GM12878 (cell line): ENCODE measurements at regions of chr2 and their contacts with region 1.

Region 1: GRCh38 chr2:8514796-8515758 is 166.8 kb upstream of the ID2 start:
- DNase-seq: peak; percentile 99
- ATAC-seq: peak; percentile 82
- H3K4me3 ChIP-seq: peak overlapping the region; percentile 51; the same call in 1 of the 2 replicates
- H3K27ac ChIP-seq: peak overlapping the region; percentile 93
- H3K4me1 ChIP-seq: peaks cover 46% of the 10 kb centered on the region
- H3K27me3 ChIP-seq: no peaks in the 10 kb centered on the region
- CTCF ChIP-seq: no peak
- EP300 ChIP-seq: peak; percentile 76 to 95; a peak in 3 of 4 replicates
- POLR2A ChIP-seq: no peak
- RAD21 ChIP-seq: peak; percentile 36; the same call in 1 of the 2 replicates

Region 2: DNA sequence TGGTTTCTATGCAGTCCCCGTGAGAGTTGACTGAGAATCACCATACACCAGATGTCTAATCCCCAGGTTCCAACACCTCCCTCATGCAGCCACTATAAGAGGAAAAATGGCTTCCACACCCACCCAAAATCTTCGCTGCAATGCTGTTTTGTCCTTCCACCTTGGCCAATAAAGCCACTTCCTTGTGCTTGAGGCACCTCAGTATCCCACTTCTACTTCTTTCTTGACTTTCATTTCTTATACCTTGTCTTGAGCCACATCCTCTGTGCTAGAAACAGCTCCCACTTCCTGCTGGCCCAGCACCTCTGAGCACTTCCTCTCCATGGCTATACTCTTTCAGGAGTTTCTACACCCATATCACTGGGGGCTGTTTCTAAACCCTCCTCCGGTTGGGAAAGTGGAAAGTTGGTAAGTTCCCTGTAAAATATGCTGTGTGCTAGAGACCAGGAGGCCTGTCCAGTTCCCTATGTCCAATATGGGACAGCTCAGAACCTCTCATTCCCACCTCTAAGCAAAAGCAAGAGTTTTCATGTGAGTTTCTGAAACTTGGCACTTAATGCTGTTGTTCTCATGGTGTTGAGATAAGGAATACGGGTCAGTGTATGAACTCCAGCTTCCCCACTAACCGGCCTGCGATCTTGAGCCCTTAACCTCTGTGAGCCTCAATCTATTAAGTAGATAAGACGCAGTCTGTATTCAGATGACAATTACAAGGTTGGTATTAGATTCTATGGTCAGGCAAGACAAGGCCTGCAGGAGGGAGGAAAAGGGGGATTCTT is 42.3 kb before region 1 on chr2:
- CTCF ChIA-PET with region 1: interaction called, 5 read pairs
- POLR2A ChIA-PET with region 1: interaction called, 73 read pairs
- RAD21 ChIA-PET with region 1: interaction called, 49 read pairs
- SMC1A ChIA-PET with region 1: interaction called, 34 read pairs
- in situ Hi-C with region 1: no loop called
- intact Hi-C with region 1: no loop called
- DNase-seq: no peak
- ATAC-seq: peak; percentile 20
- H3K4me3 ChIP-seq: no peak overlapping the region
- H3K27ac ChIP-seq: peak overlapping the region; percentile 33
- H3K4me1 ChIP-seq: peaks cover 59% of the 10 kb centered on the region
- H3K27me3 ChIP-seq: no peaks in the 10 kb centered on the region
- CTCF ChIP-seq: no peak
- EP300 ChIP-seq: peak; percentile 10 to 24; a peak in 1 of 4 replicates
- POLR2A ChIP-seq: no peak
- RAD21 ChIP-seq: no peak

Region 3: GRCh38 chr2:8559805-8560204 is 44.7 kb after region 1 on chr2:
- CTCF ChIA-PET with region 1: no interaction called
- POLR2A ChIA-PET with region 1: no interaction called
- RAD21 ChIA-PET with region 1: no interaction called
- SMC1A ChIA-PET with region 1: no interaction called
- in situ Hi-C with region 1: no loop called
- intact Hi-C with region 1: no loop called
- DNase-seq: no peak
- ATAC-seq: no peak
- H3K4me3 ChIP-seq: no peak overlapping the region
- H3K27ac ChIP-seq: no peak overlapping the region
- H3K4me1 ChIP-seq: no peaks in the 10 kb centered on the region
- H3K27me3 ChIP-seq: no peaks in the 10 kb centered on the region
- CTCF ChIP-seq: no peak
- EP300 ChIP-seq: no peak
- POLR2A ChIP-seq: no peak
- RAD21 ChIP-seq: no peak

Region 4: DNA sequence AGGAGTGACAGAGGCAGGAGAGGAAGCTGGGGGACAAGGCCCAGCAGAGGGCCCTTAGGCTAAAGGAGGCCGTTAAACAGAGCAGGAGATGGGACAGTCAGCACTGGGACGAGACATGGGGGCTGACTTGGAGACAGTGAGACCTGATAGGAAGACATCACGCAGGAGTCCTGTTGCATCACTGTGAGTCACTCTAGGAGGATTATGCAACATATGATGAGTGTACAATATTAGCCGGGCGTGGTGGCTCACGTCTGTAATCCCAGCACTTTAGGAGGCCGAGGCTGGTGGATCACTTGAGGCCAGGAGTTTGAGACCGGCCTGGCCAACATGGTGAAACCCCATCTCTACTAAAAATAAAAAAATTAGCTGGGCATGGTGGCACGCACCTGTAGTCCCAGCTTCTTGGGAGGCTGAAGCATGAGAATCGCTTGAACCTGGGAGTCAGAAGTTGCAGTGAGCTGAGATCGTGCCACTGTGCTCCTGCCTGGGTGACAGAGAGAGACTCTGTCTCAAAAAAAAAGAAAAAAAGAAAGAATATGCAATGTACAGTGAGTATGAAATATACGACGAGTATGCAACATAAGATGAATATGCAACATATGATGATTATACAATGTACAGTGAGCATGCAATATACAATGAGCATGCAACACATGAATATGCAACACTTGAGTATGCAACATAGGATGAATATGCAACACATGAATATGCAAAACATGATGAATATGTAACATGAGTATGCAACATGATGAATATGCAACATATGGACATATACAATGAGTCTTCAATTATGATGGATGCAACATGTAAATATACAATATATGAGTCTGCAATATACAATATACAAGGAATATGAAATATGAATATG is 83.5 kb after region 1 on chr2:
- CTCF ChIA-PET with region 1: no interaction called
- POLR2A ChIA-PET with region 1: no interaction called
- RAD21 ChIA-PET with region 1: no interaction called
- SMC1A ChIA-PET with region 1: no interaction called
- in situ Hi-C with region 1: no loop called
- intact Hi-C with region 1: no loop called
- DNase-seq: no peak
- ATAC-seq: no peak
- H3K4me3 ChIP-seq: no peak overlapping the region
- H3K27ac ChIP-seq: no peak overlapping the region
- H3K4me1 ChIP-seq: peaks cover 3% of the 10 kb centered on the region; the same call in 1 of the 2 replicates
- H3K27me3 ChIP-seq: no peaks in the 10 kb centered on the region; a peak in 1 of 4 replicates
- CTCF ChIP-seq: no peak
- EP300 ChIP-seq: no peak
- POLR2A ChIP-seq: no peak
- RAD21 ChIP-seq: no peak